ENCODE measurements at regions of chr7 and their contacts with region 1.

Region 1: DNA sequence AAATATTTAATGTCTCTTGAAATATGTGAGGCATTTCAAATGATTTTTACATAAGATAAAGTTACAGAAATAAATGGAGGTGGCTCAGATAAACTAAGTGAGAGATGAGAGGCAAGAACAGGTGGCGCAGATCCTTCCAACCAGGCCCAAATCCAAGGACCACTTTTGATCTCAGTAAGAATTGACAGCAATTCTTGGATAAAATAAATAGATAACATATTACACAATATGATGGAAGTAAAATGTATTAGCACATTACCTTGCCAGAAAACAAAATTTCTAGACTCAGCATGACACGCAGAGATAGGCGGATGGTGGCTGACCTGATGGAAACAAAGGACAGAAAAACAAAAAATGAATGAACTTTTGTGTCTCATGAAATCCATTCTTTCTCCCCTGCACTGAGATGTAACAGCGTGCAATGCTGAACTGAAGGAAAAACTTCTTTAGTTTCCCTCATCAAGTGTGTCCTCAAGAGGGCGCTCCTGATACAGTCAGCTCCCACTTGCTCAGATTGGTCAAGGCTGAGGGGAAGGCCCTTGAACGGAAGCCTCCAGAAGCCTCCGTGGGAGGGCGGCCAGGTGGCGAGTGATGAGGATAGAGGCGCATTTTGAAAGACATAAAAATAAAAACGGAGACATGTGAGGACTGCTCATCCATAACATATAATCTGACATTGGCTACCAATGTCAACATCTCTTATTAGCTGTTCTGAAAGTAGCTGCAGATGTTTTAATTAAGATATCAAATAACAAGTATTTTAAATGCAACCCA is 62.8 kb upstream of the GSDME start:
- DNase-seq: peak; percentile 73 to 83
- H3K4me3 ChIP-seq: no peak overlapping the region
- H3K27ac ChIP-seq: peak overlapping the region; percentile 56 to 61
- H3K4me1 ChIP-seq: no peaks in the 10 kb centered on the region
- H3K27me3 ChIP-seq: no peaks in the 10 kb centered on the region
- CTCF ChIP-seq: peak; percentile 70 to 79 (median 76)
- POLR2A ChIP-seq: no peak

Region 2: DNA sequence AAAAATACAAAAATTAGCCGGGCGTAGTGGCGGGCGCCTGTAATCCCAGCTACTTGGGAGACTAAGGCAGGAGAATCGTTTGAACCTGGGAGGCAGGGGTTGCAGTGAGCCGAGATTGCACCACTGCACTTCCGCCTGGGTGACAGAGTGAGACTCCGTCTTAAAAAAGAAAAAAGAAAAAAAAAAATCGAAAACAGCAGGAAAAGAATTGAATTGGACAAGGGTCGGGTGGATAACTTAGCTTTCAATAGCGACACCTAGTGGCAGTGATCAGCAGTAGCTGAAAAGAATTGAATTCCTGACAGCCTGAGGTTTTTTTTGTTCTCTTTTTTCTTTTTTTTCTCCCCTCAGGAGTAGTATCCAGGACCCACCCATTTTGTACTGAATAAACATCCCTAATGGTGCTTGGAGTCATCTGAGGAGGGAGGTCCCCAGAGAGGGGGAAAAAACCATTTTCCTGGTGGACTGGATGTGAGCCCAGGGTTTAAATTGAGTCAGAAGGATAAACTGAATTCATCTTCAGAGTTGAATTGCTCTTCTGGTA is 249.9 kb after region 1 on chr7:
- intact Hi-C with region 1: loop called (anchors 5 kb)
- DNase-seq: peak; percentile 47 to 50
- H3K4me3 ChIP-seq: no peak overlapping the region
- H3K27ac ChIP-seq: no peak overlapping the region
- H3K4me1 ChIP-seq: no peaks in the 10 kb centered on the region
- H3K27me3 ChIP-seq: no peaks in the 10 kb centered on the region
- CTCF ChIP-seq: peak; percentile 68 to 90 (median 80)
- POLR2A ChIP-seq: no peak

Measured in uterus (tissue), 4 donors.